Gastrocnemius medialis (tissue), 4 donors: ENCODE measurements at regions of chr4 and their contacts with region 1.

Region 1: DNA sequence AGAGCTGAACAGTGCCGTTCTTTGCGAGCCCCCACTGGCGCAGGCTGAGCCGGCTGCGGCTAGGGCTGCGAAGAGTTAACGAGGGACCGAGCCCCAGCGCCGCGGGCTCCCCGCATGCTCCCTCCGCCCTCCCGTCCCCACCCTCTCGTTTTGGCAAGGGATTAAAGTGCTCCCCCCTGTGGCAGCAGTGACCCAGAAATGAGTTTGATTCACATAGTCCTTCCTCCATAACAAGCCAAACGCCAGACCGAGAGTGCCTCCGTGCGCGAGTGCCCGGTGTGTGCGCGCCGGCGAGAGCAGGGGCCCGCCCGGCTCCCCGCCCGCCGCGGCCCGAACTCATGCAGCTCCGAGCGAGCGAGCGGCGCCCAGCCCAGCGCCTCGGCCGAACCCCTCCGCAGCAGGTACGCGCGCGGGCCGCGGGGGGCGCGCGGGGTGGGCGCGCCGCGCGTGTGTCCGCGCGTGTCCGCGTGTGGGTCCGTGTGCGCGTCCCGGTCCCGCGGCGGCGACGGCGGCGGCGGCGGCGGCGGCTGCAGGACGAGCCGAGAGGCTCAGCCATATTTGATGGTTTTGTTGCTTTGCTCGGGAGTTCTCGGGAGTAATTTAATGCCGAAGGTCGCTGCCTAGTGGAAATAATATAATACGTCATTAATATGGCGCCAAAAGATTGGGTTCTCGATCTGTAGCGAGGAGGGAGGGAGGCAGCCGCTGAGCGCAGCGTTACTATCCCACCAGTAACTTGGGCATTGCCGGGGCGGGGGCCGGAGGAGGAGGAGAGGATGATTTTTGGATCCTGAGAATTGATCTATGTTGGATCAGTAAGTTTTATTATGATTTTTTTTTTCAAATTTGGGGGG is at the start of gene JADE1:
- DNase-seq: peak; percentile 79 to 87
- ATAC-seq: peak; percentile 51 to 55
- H3K4me3 ChIP-seq: peak within 1 kb of the TSS; percentile 68 to 97 (median 90)
- H3K27ac ChIP-seq: peak within 1 kb of the TSS; percentile 90 to 95 (median 93)
- H3K4me1 ChIP-seq: peaks cover 7 to 18% of the 10 kb centered on the region in 2 donors
- H3K27me3 ChIP-seq: no peaks in the 10 kb centered on the region
- CTCF ChIP-seq: peak; percentile 25 to 72 (median 62)
- POLR2A ChIP-seq: peak; percentile 57 to 75
- total RNA-seq, gene JADE1: 14.2 to 21.1 (median 14.9) TPM

Region 2: DNA sequence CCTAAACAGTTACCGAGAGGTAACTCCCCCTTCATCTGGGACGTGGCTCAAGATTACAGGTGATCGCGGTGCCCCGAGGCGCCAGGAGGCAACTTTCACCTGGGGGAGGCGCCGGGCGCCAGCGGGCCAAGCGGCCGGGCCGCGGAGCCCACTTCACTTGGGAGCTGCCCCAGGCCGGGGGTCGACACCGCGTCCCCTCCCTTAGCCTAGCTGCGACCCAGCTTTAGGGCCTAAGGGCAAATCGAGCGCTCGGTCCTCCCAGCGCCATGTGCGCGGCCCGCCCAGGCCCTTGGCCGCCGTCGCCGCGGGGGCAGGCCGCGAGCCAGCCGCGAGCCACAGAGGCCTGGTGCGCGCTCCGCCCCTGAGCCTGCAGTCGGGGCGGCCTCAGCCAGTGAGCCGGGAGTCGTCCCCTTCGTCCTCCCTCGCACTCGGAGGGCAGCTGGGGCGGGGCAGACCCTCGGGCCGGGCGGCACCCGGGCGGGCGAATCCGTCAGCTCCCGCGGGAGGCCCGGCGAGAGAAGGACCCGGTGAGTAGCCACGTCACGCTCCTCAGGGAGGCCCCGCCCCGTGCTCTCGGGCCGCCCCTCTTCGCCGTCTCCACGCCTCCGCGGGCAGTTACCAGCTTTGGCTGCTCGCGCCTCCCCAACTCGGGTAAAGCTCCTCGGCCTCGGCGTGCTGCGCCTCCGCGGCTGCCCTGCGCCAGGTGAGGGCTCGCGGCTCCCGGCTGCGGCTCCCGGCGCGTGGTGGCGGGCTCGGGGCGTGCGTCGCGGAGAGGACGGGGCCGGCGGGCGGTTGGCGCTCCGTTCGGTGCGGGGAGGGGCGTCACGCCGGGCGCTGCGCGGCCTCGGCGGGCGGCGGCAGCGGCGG is 748.8 kb before region 1 on chr4 and contains the start of gene LARP1B:
- in situ Hi-C with region 1: no loop called
- intact Hi-C with region 1: loop called (anchors 5 kb)
- DNase-seq: peak; percentile 94
- ATAC-seq: peak; percentile 88 to 91
- H3K4me3 ChIP-seq: peak within 1 kb of the TSS; percentile 55 to 95 (median 65)
- H3K27ac ChIP-seq: peak within 1 kb of the TSS; percentile 92 to 99 (median 94)
- H3K4me1 ChIP-seq: peaks cover 10 to 12% of the 10 kb centered on the region in 2 donors
- H3K27me3 ChIP-seq: no peaks in the 10 kb centered on the region
- CTCF ChIP-seq: peak in 1 of 5 experiments; percentile 9
- POLR2A ChIP-seq: peak; percentile 92 to 94
- total RNA-seq, gene LARP1B: 19.5 to 23.5 (median 22.8) TPM

Region 3: GRCh38 chr4:128454281-128455075 is 355.2 kb before region 1 on chr4:
- in situ Hi-C with region 1: no loop called
- intact Hi-C with region 1: loop called (anchors 2 kb)
- DNase-seq: peak; percentile 70 to 81
- ATAC-seq: peak; percentile 93 to 94
- H3K4me3 ChIP-seq: no peak overlapping the region
- H3K27ac ChIP-seq: peak overlapping the region in 2 of 4 donors; percentile 9
- H3K4me1 ChIP-seq: peaks cover 17 to 20% of the 10 kb centered on the region in 2 donors
- H3K27me3 ChIP-seq: no peaks in the 10 kb centered on the region
- CTCF ChIP-seq: peak; percentile 50 to 80 (median 71)
- POLR2A ChIP-seq: no peak

Region 4: GRCh38 chr4:128590773-128591172 is 218.9 kb before region 1 on chr4:
- in situ Hi-C with region 1: no loop called
- intact Hi-C with region 1: loop called (anchors 5 kb)
- DNase-seq: peak; percentile 61 to 81
- ATAC-seq: peak; percentile 96 to 100
- H3K4me3 ChIP-seq: no peak overlapping the region
- H3K27ac ChIP-seq: peak overlapping the region; percentile 71 to 83 (median 72)
- H3K4me1 ChIP-seq: peaks cover 23% of the 10 kb centered on the region in 2 donors
- H3K27me3 ChIP-seq: no peaks in the 10 kb centered on the region
- CTCF ChIP-seq: no peak
- POLR2A ChIP-seq: no peak

Region 5: DNA sequence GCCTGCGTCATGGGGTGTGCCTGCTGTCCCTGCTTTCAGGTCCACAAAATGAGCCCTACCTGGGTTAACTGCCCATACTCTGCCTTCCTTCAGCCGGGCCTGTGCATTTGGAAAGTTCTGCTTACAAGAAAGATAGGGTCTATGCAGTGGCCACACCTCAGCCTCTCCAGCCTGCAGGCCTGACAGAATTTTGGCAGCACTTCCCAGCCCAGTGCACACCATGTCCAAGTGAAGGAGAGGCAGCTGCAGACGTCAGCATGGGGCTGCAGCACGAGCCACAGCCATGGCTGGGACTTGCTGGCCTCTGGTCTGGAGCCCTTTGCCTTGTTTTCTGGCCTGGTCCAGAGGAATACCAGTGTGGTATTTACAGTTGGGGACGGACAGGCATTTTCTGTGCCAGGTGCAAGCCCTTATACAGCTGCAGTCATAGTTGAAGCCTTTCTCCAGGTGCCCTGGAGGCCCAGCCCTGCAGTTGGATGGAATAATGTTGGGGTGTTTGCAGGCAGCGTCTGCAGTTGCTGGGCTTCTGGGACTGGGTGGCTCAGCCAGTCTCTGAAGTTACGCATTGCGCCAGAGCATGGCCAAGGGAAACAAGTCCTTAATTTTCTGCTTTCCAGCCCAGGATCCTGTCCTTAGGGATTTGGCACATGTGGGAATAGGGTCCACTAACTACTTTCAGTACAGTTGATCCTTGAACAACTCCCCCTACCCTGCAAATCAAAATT is 26.0 kb after region 1 on chr4:
- in situ Hi-C with region 1: no loop called
- intact Hi-C with region 1: loop called (anchors 2 kb)
- DNase-seq: peak; percentile 75 to 85
- ATAC-seq: peak; percentile 89 to 92
- H3K4me3 ChIP-seq: no peak overlapping the region
- H3K27ac ChIP-seq: peak overlapping the region; percentile 71 to 81 (median 80)
- H3K4me1 ChIP-seq: peaks cover 44 to 67% of the 10 kb centered on the region in 2 donors
- H3K27me3 ChIP-seq: no peaks in the 10 kb centered on the region
- CTCF ChIP-seq: no peak
- POLR2A ChIP-seq: no peak

Region 6: GRCh38 chr4:129093191-129093920 is 283.7 kb after region 1 on chr4 and contains the start of gene SCLT1:
- in situ Hi-C with region 1: loop called in 1 of 4 experiments (anchors 25 kb)
- intact Hi-C with region 1: no loop called
- DNase-seq: peak; percentile 98 to 99
- ATAC-seq: peak; percentile 99
- H3K4me3 ChIP-seq: peak within 1 kb of the TSS; percentile 78 to 89 (median 84)
- H3K27ac ChIP-seq: peak within 1 kb of the TSS; percentile 90 to 94 (median 94)
- H3K4me1 ChIP-seq: peaks cover 18 to 19% of the 10 kb centered on the region in 2 donors
- H3K27me3 ChIP-seq: no peaks in the 10 kb centered on the region
- CTCF ChIP-seq: peak in 1 of 5 experiments; percentile 13
- POLR2A ChIP-seq: peak; percentile 65 to 87
- total RNA-seq, gene SCLT1: 1.0 to 4.1 (median 1.8) TPM